CD4-positive, alpha-beta T cell (primary cell): ENCODE measurements at regions of chr14 and their contacts with region 1.

Region 1: GRCh38 chr14:52706724-52707706 is at the start of gene PSMC6:
- DNase-seq: peak; percentile 90 to 97 (median 95)
- ATAC-seq: peak; percentile 98
- H3K4me3 ChIP-seq: peak within 1 kb of the TSS; percentile 72
- H3K4me3 Mint-ChIP-seq: peak within 1 kb of the TSS; percentile 96
- H3K27ac ChIP-seq: peak within 1 kb of the TSS; percentile 71 to 88
- H3K27ac Mint-ChIP-seq: peak within 1 kb of the TSS; percentile 94
- H3K4me1 ChIP-seq: peaks cover 13% of the 10 kb centered on the region
- H3K4me1 Mint-ChIP-seq: peaks cover 48% of the 10 kb centered on the region
- H3K27me3 ChIP-seq: no peaks in the 10 kb centered on the region
- H3K27me3 Mint-ChIP-seq: no peaks in the 10 kb centered on the region
- CTCF ChIP-seq: no peak
- total RNA-seq, gene PSMC6: 110 to 111 TPM

Region 2: DNA sequence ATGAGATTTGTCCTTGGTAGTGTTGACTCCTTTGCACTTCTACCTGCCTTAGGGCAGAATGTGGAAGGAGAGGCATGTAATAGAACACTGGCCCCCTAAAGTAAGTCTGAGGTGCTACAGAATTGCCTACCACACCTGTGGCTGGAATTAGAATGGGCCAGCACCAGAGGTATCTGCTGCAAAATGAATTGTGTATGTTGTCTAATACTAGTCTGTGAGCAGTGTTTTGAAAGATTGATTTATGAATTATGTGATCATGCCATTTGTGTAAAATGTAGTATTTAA is 17.3 kb after region 1 on chr14:
- CTCF ChIA-PET with region 1: interaction called, 4 read pairs
- POLR2A ChIA-PET with region 1: interaction called, 5 read pairs
- intact Hi-C with region 1: loop called in 1 of 2 experiments (anchors 2 kb)
- DNase-seq: no peak
- ATAC-seq: peak; percentile 41
- H3K4me3 ChIP-seq: no peak overlapping the region
- H3K4me3 Mint-ChIP-seq: no peak overlapping the region
- H3K27ac ChIP-seq: no peak overlapping the region
- H3K27ac Mint-ChIP-seq: peak overlapping the region; percentile 58
- H3K4me1 ChIP-seq: peaks cover 3% of the 10 kb centered on the region
- H3K4me1 Mint-ChIP-seq: peaks cover 36% of the 10 kb centered on the region
- H3K27me3 ChIP-seq: no peaks in the 10 kb centered on the region
- H3K27me3 Mint-ChIP-seq: no peaks in the 10 kb centered on the region
- CTCF ChIP-seq: no peak

Region 3: GRCh38 chr14:52729925-52730667 is 23.1 kb after region 1 on chr14 and contains the start of gene STYX:
- CTCF ChIA-PET with region 1: no interaction called
- POLR2A ChIA-PET with region 1: interaction called, 5 read pairs
- intact Hi-C with region 1: loop called (anchors 2 kb)
- DNase-seq: peak; percentile 94 to 100 (median 98)
- ATAC-seq: peak; percentile 95
- H3K4me3 ChIP-seq: peak within 1 kb of the TSS; percentile 100
- H3K4me3 Mint-ChIP-seq: peak within 1 kb of the TSS; percentile 93
- H3K27ac ChIP-seq: peak within 1 kb of the TSS; percentile 84 to 89
- H3K27ac Mint-ChIP-seq: peak within 1 kb of the TSS; percentile 94
- H3K4me1 ChIP-seq: peaks cover 36% of the 10 kb centered on the region
- H3K4me1 Mint-ChIP-seq: peaks cover 36% of the 10 kb centered on the region
- H3K27me3 ChIP-seq: no peaks in the 10 kb centered on the region
- H3K27me3 Mint-ChIP-seq: no peaks in the 10 kb centered on the region
- CTCF ChIP-seq: no peak
- total RNA-seq, gene STYX: 15.3 to 16.2 TPM

Region 4: DNA sequence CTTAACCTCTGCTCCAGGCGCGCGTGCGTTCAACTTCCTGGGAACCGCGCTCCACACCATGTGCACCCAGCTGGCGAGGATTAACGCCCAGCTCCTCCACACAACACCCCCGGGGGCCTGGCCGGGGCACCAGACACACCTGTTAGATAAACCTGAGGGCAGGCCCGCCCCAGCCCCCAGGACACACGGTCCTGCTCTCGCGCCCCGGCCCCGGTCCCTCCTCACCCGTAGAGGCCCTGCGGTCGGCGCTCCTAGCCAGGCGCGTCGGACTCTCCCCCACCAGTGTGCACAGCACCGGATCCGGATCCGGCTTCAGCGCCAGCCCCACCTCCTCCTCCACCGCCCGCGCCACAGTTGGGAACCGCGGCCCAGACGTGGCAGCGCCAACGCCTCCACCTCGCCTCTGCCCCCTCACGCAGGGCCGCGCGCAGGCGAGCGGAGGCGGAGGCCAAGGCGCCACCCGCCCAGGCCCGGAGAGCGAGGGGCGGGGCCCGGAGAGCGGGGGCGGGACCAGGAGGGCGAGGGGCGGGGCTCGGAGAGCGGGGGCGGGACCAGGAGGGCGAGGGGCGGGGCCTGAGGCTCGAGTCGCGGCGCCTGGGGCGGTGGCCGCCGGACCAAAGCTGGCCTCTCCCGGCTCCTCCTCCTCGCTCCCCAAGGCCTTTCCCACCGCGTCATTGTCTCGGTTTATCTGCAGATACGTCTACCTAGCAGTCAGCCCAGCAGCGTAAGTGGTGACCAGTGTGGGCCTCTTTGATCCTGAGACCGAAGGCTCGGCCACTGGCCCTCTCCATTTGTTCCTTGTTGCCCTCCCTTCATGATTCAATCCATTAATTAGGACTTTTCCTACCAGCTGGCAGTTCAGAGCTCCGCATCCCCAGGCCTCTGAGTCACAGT is 84.4 kb after region 1 on chr14 and contains the start of gene GNPNAT1:
- CTCF ChIA-PET with region 1: no interaction called
- POLR2A ChIA-PET with region 1: interaction called, 4 read pairs
- intact Hi-C with region 1: loop called in 1 of 2 experiments (anchors 2 kb)
- DNase-seq: peak; percentile 79 to 97 (median 87)
- ATAC-seq: peak; percentile 97
- H3K4me3 ChIP-seq: peak within 1 kb of the TSS; percentile 95
- H3K4me3 Mint-ChIP-seq: peak within 1 kb of the TSS; percentile 94
- H3K27ac ChIP-seq: peak within 1 kb of the TSS; percentile 64 to 78
- H3K27ac Mint-ChIP-seq: peak within 1 kb of the TSS; percentile 92
- H3K4me1 ChIP-seq: peaks cover 21% of the 10 kb centered on the region
- H3K4me1 Mint-ChIP-seq: peaks cover 51% of the 10 kb centered on the region
- H3K27me3 ChIP-seq: no peaks in the 10 kb centered on the region
- H3K27me3 Mint-ChIP-seq: no peaks in the 10 kb centered on the region
- CTCF ChIP-seq: no peak
- total RNA-seq, gene GNPNAT1: 3.8 to 4.6 TPM

Region 5: DNA sequence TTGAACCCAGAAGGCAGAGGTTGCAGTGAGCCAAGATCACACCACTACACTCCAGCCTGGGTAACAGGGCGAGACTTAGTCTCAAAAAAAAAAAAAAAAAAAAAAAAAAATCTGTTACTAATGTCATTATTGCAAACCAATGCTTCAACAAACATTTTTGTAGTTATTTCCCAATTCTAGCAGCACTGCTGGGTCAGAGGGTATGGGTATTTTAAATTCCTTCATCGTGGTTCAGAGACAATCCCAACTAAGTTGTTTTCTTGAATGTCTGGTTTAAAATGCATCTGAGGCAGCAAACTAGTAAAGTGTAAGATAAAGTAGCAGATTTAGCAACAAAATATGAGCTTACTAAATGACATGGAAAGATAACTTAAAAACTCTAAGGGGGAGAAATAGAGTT is 178.2 kb after region 1 on chr14:
- CTCF ChIA-PET with region 1: no interaction called
- POLR2A ChIA-PET with region 1: no interaction called
- intact Hi-C with region 1: no loop called
- DNase-seq: no peak
- ATAC-seq: no peak
- H3K4me3 ChIP-seq: no peak overlapping the region
- H3K4me3 Mint-ChIP-seq: no peak overlapping the region
- H3K27ac ChIP-seq: no peak overlapping the region
- H3K27ac Mint-ChIP-seq: no peak overlapping the region
- H3K4me1 ChIP-seq: no peaks in the 10 kb centered on the region
- H3K4me1 Mint-ChIP-seq: no peaks in the 10 kb centered on the region
- H3K27me3 ChIP-seq: no peaks in the 10 kb centered on the region
- H3K27me3 Mint-ChIP-seq: no peaks in the 10 kb centered on the region
- CTCF ChIP-seq: no peak